ENCODE measurements at regions of chr20 and their contacts with region 1.

Region 1: GRCh38 chr20:21019814-21020658 is 86.1 kb downstream of the LINC00237 start:
- DNase-seq: no peak
- ATAC-seq: no peak
- H3K4me3 ChIP-seq: no peak overlapping the region
- H3K4me3 Mint-ChIP-seq: no peak overlapping the region
- H3K27ac ChIP-seq: no peak overlapping the region
- H3K27ac Mint-ChIP-seq: no peak overlapping the region
- H3K4me1 ChIP-seq: no peaks in the 10 kb centered on the region
- H3K4me1 Mint-ChIP-seq: no peaks in the 10 kb centered on the region
- H3K27me3 ChIP-seq: peaks cover 4% of the 10 kb centered on the region
- H3K27me3 Mint-ChIP-seq: peaks cover 28 to 43% of the 10 kb centered on the region in 2 donors
- CTCF ChIP-seq: no peak

Region 2: GRCh38 chr20:20956513-20956931 is 63.5 kb before region 1 on chr20:
- intact Hi-C with region 1: loop called (anchors 10 kb)
- DNase-seq: no peak
- ATAC-seq: no peak
- H3K4me3 ChIP-seq: no peak overlapping the region
- H3K4me3 Mint-ChIP-seq: no peak overlapping the region
- H3K27ac ChIP-seq: no peak overlapping the region
- H3K27ac Mint-ChIP-seq: no peak overlapping the region
- H3K4me1 ChIP-seq: no peaks in the 10 kb centered on the region
- H3K4me1 Mint-ChIP-seq: peaks cover 0 to 8% of the 10 kb centered on the region in 2 donors
- H3K27me3 ChIP-seq: no peaks in the 10 kb centered on the region
- H3K27me3 Mint-ChIP-seq: peaks cover 10 to 44% of the 10 kb centered on the region in 2 donors
- CTCF ChIP-seq: no peak

Measured in natural killer cell (primary cell).